Activated CD8-positive, alpha-beta memory T cell treated with anti-CD3 and anti-CD28 coated beads, Interleukin-2, amount 10 ng/mL, durations not matched to agents 7 days and 5 days (primary cell): ENCODE measurements at regions of chr9 and their contacts with region 1.

Region 1: DNA sequence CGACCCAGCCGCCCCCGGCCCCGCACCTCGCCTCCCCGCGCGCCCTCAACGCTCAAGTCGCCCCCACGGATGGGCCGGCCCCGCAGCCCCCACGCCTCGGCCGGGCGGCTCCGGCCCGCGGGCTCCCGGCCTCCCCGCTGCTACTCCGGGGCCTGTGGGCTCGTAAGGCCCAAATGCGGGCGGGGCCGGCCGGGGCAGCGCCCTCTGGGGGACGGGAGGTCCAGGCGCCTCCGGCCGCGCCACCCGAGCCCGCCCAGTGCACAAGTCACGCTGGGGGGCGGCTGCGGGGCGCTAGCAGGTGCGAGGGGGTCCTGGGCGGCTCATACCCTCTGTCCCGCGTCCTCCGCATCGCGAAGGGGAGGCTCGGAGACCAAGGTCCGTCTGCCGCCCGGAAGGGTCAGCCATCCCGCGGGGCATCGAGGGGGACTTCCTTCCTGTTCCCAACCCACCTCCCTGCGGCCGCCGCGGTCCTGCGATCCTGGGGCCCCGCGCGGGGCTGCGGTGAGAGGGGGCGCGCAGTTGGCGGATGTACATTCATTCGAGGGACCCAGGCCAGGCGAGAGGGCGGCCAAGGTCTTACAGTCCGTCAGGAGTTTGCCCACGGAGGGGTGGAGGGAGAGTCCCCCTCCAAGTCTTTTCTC is at the start of gene CIZ1:
- DNase-seq: peak; percentile 81
- ATAC-seq: peak; percentile 91
- H3K4me3 Mint-ChIP-seq: peak within 1 kb of the TSS; percentile 99
- H3K27ac Mint-ChIP-seq: peak within 1 kb of the TSS; percentile 93
- H3K4me1 Mint-ChIP-seq: peaks cover 42% of the 10 kb centered on the region
- H3K27me3 Mint-ChIP-seq: no peaks in the 10 kb centered on the region
- total RNA-seq, gene CIZ1: 140 to 153 TPM

Region 2: GRCh38 chr9:128159784-128160602 is 31.5 kb before region 1 on chr9 and contains the start of gene BBLN:
- CTCF ChIA-PET with region 1: interaction called, 24 read pairs
- DNase-seq: peak; percentile 95
- ATAC-seq: peak; percentile 92
- H3K4me3 Mint-ChIP-seq: peak within 1 kb of the TSS; percentile 80
- H3K27ac Mint-ChIP-seq: peak within 1 kb of the TSS; percentile 79
- H3K4me1 Mint-ChIP-seq: peaks cover 15% of the 10 kb centered on the region
- H3K27me3 Mint-ChIP-seq: no peaks in the 10 kb centered on the region
- total RNA-seq, gene BBLN: 85.1 to 85.3 TPM

Region 3: DNA sequence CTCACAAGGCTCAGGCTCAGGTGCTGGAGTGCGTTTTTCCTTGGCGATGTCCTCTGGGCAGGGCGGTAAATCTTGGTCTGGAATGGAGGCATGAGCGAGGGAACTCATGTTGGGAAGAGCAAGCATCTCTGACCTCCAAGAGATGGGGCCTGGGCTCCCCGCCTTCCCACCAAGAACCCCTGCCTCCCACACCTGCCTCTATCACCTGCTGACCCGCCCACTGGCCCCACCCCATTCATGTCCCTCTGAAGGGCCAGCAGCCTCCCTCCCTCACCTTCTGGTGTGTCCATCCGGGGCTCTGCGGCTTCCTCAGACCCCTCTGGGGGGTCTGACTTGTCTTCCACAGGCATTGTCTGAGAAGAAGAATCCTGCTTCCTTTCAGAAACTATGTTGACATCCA is 11.1 kb before region 1 on chr9:
- CTCF ChIA-PET with region 1: no interaction called
- DNase-seq: no peak
- ATAC-seq: no peak
- H3K4me3 Mint-ChIP-seq: no peak overlapping the region
- H3K27ac Mint-ChIP-seq: no peak overlapping the region
- H3K4me1 Mint-ChIP-seq: peaks cover 3% of the 10 kb centered on the region
- H3K27me3 Mint-ChIP-seq: no peaks in the 10 kb centered on the region

Region 4: GRCh38 chr9:128201441-128202369 is 10.2 kb after region 1 on chr9:
- CTCF ChIA-PET with region 1: interaction called, 15 read pairs
- DNase-seq: no peak
- ATAC-seq: no peak
- H3K4me3 Mint-ChIP-seq: no peak overlapping the region
- H3K27ac Mint-ChIP-seq: no peak overlapping the region
- H3K4me1 Mint-ChIP-seq: peaks cover 14% of the 10 kb centered on the region
- H3K27me3 Mint-ChIP-seq: peaks cover 24% of the 10 kb centered on the region

Region 5: GRCh38 chr9:128383007-128383753 is 191.7 kb after region 1 on chr9:
- CTCF ChIA-PET with region 1: no interaction called
- DNase-seq: no peak
- ATAC-seq: no peak
- H3K4me3 Mint-ChIP-seq: no peak overlapping the region
- H3K27ac Mint-ChIP-seq: no peak overlapping the region
- H3K4me1 Mint-ChIP-seq: no peaks in the 10 kb centered on the region
- H3K27me3 Mint-ChIP-seq: no peaks in the 10 kb centered on the region